ENCODE measurements at regions of chr1 and their contacts with region 1.

Region 1: DNA sequence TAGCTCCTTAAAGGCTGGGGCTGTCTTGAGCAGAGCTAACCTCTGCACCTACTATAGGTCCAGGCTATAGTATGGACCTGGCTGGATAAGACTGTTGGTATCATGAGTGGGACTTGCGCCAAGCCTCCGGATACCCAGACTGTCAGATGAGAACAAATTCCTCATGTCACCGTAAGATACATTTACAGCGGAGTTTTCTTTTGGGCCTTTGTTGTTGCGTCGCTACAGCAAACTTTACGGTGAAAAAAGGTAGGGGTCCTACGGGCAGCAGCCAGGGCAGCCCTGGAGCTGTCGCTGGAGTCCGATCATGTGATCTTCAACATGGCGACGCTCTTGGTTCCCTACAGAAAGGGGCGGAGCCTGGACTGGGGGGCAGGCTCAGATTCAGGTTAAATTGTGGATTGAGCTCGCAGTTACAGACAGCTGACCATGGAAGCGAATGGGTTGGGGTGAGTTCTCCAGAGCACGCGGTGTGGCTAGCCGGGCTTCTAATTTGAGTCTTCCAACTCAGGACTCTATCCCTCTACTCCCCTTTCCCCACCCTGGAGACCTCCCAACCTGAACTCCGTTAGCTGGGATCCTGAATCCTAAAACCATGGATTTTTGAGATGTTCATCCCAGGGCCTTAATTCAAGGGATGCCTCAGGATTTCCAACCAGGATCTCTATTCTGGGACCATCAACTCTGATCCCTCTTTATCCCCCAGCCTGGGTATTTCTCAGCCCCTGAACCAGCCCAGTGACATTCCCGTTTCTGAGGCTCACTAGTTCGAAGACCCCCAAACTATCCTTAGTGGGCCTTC is at the start of gene UROD:
- DNase-seq: peak; percentile 75 to 95 (median 88)
- ATAC-seq: peak; percentile 75 to 83
- H3K4me3 Mint-ChIP-seq: peak within 1 kb of the TSS; percentile 81 to 97 (median 93)
- H3K27ac Mint-ChIP-seq: peak within 1 kb of the TSS; percentile 87 to 99 (median 95)
- H3K4me1 Mint-ChIP-seq: peaks cover 21 to 56% (median 49%) of the 10 kb centered on the region in 4 donors
- H3K27me3 Mint-ChIP-seq: no peaks in the 10 kb centered on the region
- polyA plus RNA-seq, gene UROD: 71.6 to 80.9 (median 74.9) TPM

Region 2: GRCh38 chr1:44390277-44390676 is 621.8 kb before region 1 on chr1:
- POLR2A ChIA-PET with region 1: no interaction called
- DNase-seq: no peak
- ATAC-seq: no peak
- H3K4me3 Mint-ChIP-seq: no peak overlapping the region
- H3K27ac Mint-ChIP-seq: no peak overlapping the region
- H3K4me1 Mint-ChIP-seq: no peaks in the 10 kb centered on the region
- H3K27me3 Mint-ChIP-seq: peaks cover 11 to 23% (median 18%) of the 10 kb centered on the region in 5 donors

Region 3: DNA sequence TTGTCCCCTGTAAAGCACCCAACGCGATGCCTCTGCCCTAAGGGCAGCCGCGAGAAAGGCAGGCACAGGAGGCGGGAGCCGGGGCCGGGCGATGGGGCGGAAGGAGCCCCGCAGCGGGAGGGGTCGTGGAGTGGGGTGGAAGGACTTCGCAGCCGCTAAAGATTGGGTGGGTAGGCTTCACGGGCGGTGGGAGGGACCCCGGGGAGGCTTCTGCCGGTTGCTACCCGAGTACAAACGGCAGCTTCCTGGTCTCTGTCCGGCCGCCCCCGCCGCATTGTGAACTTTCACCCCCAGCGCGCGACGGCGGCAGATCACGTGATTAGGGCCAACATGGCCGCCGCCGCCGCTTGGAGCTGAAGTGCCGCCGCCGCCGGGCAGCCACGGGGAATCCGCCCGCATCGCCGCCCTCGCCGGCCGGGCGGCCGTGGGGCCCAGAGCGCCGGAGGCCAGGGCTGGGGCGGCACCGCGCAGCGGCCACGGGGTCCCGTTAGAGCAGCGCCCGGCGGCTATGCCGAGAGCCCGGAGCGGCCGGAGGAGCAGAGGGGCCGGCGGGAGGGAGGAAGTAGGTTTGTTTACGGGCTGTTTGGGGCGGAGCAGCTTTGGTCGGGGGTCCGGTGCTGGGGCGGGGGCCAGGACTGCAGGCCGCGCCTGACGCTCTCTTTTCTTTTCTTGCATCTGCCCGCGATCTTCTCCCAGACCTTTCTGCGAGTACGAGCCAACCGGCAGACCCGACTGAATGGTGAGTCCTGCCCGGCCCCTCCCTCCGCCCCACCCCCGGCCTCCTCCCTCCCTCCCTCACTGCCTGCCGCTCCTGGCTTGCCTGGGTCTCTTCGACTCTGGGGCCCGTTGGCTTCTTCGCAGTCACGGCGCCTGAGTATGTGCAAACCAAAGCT is 380.1 kb before region 1 on chr1:
- POLR2A ChIA-PET with region 1: interaction called, 10 read pairs
- DNase-seq: peak; percentile 79 to 94 (median 86)
- ATAC-seq: peak; percentile 77 to 78
- H3K4me3 Mint-ChIP-seq: peak overlapping the region; percentile 90 to 96 (median 92)
- H3K27ac Mint-ChIP-seq: peak overlapping the region; percentile 96 to 99 (median 98)
- H3K4me1 Mint-ChIP-seq: peaks cover 25 to 53% (median 48%) of the 10 kb centered on the region in 4 donors
- H3K27me3 Mint-ChIP-seq: no peaks in the 10 kb centered on the region

Region 4: DNA sequence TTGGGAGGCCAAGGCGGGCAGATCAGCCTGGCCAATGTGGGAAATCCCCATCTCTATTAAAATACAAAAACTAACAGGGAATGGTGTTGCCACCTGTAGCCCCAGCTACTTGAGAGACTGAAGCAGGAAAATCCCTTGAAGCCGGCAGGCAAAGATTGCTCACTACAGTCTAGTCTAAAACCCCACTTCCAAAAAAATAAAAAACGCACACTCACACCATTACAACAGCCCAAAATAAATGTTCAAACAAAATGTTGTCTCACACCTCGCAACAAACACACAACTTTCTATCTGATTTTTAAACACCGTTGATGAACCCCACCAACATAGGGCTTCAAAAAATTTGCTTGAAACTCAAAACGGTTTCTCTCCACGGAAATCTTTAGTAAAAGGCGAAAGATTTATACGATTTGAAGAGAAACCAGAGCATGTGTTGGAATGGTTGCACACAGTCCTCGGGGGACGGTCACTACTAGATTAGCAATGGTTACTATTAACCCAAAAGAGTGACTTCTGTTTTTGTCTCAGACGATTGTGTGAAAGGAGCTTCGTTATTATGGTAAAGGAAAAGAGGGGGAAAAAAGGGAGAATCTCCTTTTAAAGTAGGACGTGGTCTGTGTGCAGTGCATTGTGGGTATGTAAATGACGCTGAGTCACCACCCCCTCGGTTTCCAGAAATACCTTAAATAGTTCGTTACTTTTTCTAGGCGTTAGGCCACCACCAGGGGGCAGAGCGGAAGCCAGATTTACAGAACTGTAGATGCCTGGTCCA is 281.1 kb before region 1 on chr1 and contains the start of gene RNU5D-1:
- POLR2A ChIA-PET with region 1: interaction called, 21 read pairs
- DNase-seq: peak; percentile 84 to 96 (median 90)
- ATAC-seq: peak; percentile 80 to 83
- H3K4me3 Mint-ChIP-seq: peak within 1 kb of the TSS; percentile 53 to 89 (median 80)
- H3K27ac Mint-ChIP-seq: peak within 1 kb of the TSS; percentile 96 to 100 (median 99)
- H3K4me1 Mint-ChIP-seq: peaks cover 19 to 40% (median 32%) of the 10 kb centered on the region in 4 donors
- H3K27me3 Mint-ChIP-seq: no peaks in the 10 kb centered on the region
- polyA plus RNA-seq, gene RNU5D-1: not detected

Region 5: DNA sequence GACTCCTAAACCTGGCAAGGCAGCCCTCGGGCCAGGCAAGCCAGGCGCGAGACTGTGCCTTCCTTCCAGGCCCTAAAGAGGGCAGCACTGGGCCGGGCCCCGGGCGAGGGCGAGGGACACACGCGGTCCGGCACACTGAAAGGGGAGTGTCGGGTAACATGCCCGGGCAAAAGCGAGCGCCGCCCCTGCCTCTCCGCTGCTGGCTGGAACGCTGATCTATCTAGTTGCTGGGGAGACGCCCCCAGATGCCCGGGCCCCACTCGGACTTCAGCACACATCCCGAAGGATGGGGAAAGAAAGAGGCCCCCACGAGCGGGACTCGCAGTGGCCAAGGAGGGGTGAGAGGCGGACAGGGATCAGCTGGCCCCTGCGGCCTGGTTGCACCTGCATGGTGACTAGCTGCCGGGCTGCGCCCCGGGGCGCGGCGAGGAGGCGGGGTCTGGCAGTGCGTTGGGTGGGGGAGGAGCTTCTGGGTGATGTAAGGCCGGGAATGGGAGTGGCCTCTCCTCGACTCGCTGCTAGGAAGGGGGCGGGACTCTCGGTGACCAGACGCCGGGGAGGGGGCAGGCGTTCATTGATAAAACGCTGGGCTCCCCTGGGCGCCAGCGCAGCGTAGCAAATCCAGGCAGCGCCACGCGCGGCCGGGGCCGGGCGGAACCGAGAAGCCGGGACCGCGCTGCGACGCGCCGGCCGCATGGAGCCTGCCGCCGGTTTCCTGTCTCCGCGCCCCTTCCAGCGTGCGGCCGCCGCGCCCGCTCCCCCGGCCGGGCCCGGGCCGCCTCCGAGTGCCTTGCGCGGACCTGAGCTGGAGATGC is 212.1 kb before region 1 on chr1 and contains the start of gene PLK3:
- POLR2A ChIA-PET with region 1: interaction called, 34 read pairs
- DNase-seq: peak; percentile 97 to 99 (median 98)
- ATAC-seq: peak; percentile 78 to 81
- H3K4me3 Mint-ChIP-seq: peak within 1 kb of the TSS; percentile 72 to 99 (median 97)
- H3K27ac Mint-ChIP-seq: peak within 1 kb of the TSS; percentile 89 to 99 (median 99)
- H3K4me1 Mint-ChIP-seq: peaks cover 17 to 48% (median 45%) of the 10 kb centered on the region in 4 donors
- H3K27me3 Mint-ChIP-seq: no peaks in the 10 kb centered on the region
- polyA plus RNA-seq, gene PLK3: 14.3 to 36.0 (median 25.5) TPM

Region 6: DNA sequence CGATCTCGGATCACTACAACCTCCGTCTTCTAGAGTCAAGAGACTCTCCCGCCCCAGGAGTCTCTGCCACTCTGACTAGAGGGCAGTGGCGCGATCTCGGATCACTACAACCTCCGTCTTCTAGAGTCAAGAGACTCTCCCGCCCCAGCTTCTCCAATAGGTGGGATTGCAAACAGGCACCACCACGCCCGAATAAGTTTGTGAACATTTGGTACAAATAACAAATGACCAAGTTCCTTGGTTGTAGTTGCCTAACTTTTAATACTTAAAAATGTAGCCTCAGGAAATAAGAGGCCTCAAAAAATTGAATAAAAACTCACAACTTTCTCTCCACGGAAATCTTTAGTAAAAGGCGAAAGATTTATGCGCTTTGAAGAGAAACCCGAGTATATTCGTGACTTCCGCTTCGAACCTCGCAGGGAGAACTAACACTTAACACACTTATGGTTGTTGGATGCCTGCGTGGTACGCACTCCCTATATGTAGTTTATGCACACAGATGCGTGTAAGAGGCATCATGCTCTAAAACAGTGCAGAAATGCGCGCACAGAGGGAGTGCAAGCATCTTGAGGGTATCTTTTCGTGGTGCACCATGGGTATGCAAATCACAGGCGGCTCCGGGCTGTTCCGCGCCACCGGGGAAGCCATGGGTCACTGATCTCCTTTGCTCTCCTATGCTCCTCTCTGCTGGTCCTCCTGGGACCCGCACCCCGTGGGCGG is 192.3 kb before region 1 on chr1:
- POLR2A ChIA-PET with region 1: interaction called, 24 read pairs
- DNase-seq: peak; percentile 61 to 98 (median 80)
- ATAC-seq: peak; percentile 78 to 79
- H3K4me3 Mint-ChIP-seq: peak overlapping the region; percentile 92 to 97 (median 94)
- H3K27ac Mint-ChIP-seq: peak overlapping the region; percentile 100
- H3K4me1 Mint-ChIP-seq: peaks cover 23 to 55% (median 42%) of the 10 kb centered on the region in 4 donors
- H3K27me3 Mint-ChIP-seq: no peaks in the 10 kb centered on the region

Region 7: DNA sequence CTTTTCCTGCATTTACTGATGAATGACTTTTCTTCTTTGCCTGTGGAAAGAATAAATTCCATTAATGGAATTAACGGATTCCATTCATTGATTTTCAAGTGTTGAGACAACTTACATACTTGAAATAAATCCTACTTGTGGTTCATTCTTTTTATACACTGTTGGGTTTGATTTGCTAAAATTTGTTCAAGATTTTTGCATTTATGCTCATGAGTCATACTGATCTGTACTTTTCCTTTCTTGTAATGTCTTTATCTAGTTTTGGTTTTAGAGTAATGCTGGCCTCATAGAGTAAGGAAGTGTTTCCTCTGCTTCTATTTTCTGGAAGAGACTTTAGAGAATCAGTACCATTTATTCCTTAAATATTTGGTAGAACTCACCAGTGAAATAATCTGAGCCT is 14.4 kb after region 1 on chr1:
- POLR2A ChIA-PET with region 1: no interaction called
- DNase-seq: no peak
- ATAC-seq: no peak
- H3K4me3 Mint-ChIP-seq: no peak overlapping the region
- H3K27ac Mint-ChIP-seq: no peak overlapping the region
- H3K4me1 Mint-ChIP-seq: no peaks in the 10 kb centered on the region
- H3K27me3 Mint-ChIP-seq: peaks cover 0 to 2% (median 0%) of the 10 kb centered on the region in 5 donors

Region 8: GRCh38 chr1:45303582-45304310 is 291.7 kb after region 1 on chr1:
- POLR2A ChIA-PET with region 1: interaction called, 112 read pairs
- DNase-seq: peak; percentile 86 to 98 (median 96)
- ATAC-seq: peak; percentile 83 to 86
- H3K4me3 Mint-ChIP-seq: peak overlapping the region; percentile 88 to 96 (median 92)
- H3K27ac Mint-ChIP-seq: peak overlapping the region; percentile 91 to 98 (median 96)
- H3K4me1 Mint-ChIP-seq: peaks cover 5 to 37% (median 20%) of the 10 kb centered on the region in 4 donors
- H3K27me3 Mint-ChIP-seq: no peaks in the 10 kb centered on the region

Measured in naive thymus-derived CD8-positive, alpha-beta T cell (primary cell).